MCF 10A (cell line): ENCODE measurements at regions of chr19 and their contacts with region 1.

Region 1: GRCh38 chr19:38929929-38930775 is at the start of gene SARS2:
- DNase-seq: peak; percentile 93
- H3K4me3 Mint-ChIP-seq: peak within 1 kb of the TSS; percentile 85
- H3K27ac Mint-ChIP-seq: peak within 1 kb of the TSS; percentile 95
- H3K4me1 Mint-ChIP-seq: peaks cover 14% of the 10 kb centered on the region
- H3K27me3 Mint-ChIP-seq: no peaks in the 10 kb centered on the region
- CTCF ChIP-seq: peak; percentile 95
- total RNA-seq, gene SARS2: 9.3 and 23.6 TPM in 2 replicates

Region 2: DNA sequence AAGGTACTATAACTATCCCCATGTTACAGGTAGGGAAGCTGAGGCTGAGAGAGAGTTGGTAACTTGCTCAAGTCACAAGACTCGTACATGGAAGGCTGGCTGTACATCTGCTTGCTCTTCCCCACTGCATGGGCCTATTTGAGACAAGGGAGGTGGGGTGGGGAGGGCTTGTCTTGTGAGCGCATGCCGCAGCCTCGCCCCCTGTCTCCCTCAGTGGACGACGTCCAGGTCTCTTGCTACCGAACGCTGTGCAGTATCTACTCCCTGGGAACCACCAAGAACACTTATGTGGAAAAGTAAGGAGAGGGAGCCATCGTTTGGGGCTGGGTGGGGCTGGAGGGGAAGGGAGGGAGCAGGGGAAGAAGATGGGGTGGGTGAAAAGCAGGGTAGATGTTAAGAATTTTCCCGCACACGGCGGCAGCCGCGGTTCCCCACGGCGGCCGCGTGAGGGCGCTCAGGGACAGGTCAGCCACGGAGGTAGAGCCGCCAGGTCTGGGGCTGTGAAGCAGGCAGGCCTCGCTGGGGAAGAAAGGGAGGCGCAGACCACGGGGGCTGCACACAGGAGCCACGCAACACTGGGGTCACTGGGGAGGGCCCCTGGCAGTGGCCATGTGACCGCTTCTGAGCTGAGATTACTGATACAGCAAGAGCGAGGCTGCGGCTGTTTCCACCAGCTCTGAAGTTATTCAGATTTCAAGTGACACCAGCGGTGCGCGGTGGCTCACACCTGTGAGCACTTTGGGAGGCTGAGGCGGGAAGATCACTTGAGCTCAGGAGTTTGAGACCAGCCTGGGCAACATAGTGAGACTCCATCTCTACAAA is 415.1 kb before region 1 on chr19:
- CTCF ChIA-PET with region 1: interaction called, 4 read pairs
- POLR2A ChIA-PET with region 1: no interaction called
- intact Hi-C with region 1: loop called (anchors 1 kb)
- DNase-seq: peak; percentile 65
- H3K4me3 Mint-ChIP-seq: no peak overlapping the region
- H3K27ac Mint-ChIP-seq: no peak overlapping the region
- H3K4me1 Mint-ChIP-seq: no peaks in the 10 kb centered on the region
- H3K27me3 Mint-ChIP-seq: peaks cover 22% of the 10 kb centered on the region
- CTCF ChIP-seq: peak; percentile 99

Region 3: GRCh38 chr19:38831142-38831605 is 99.0 kb before region 1 on chr19:
- CTCF ChIA-PET with region 1: interaction called, 3 read pairs
- POLR2A ChIA-PET with region 1: interaction called, 10 read pairs
- intact Hi-C with region 1: no loop called
- DNase-seq: peak; percentile 73
- H3K4me3 Mint-ChIP-seq: peak overlapping the region; percentile 77
- H3K27ac Mint-ChIP-seq: peak overlapping the region; percentile 82
- H3K4me1 Mint-ChIP-seq: peaks cover 17% of the 10 kb centered on the region
- H3K27me3 Mint-ChIP-seq: no peaks in the 10 kb centered on the region
- CTCF ChIP-seq: no peak

Region 4: DNA sequence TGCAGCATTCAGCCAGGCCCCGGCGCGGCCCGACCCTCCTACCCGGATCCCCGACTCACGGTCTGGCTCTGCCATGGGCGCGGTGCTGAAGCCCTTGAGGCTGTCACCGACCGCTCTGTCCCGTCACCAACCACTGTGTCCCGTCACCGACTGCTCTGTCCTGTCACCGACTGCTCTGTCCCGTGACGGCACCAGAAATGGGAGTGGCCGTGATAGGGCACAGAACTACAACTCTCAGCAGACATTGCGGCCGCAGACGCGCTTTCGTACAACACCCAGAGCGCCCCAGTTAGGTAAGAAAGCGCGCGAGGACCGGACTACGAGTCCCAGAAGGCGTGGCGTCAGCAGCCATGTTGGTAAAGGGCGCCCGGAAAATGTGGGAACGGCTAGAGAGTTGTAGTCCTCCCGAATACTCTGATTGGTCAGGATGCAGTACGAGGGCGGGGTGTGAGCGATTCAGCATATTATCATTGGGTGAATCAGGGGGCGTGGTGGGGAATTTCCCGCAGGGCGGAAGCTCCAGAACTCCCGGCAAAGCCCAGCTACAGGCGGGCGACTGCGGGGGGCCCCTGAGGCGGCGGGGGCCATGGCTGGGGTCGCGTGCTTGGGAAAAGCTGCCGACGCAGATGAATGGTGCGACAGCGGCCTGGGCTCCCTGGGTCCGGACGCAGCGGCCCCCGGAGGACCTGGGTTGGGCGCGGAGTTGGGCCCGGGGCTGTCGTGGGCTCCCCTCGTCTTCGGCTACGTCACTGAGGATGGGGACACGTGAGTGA is 30.5 kb before region 1 on chr19 and contains the starts of genes NFKBIB and SIRT2:
- CTCF ChIA-PET with region 1: interaction called, 11 read pairs
- POLR2A ChIA-PET with region 1: interaction called, 35 read pairs
- intact Hi-C with region 1: loop called (anchors 1 kb)
- DNase-seq: peak; percentile 100
- H3K4me3 Mint-ChIP-seq: peak within 1 kb of the TSS; percentile 88
- H3K27ac Mint-ChIP-seq: peak within 1 kb of the TSS; percentile 98
- H3K4me1 Mint-ChIP-seq: peaks cover 27% of the 10 kb centered on the region
- H3K27me3 Mint-ChIP-seq: no peaks in the 10 kb centered on the region
- CTCF ChIP-seq: no peak
- total RNA-seq, gene NFKBIB: 45.1 and 45.4 TPM in 2 replicates
- total RNA-seq, gene SIRT2: 35.5 and 37.4 TPM in 2 replicates

Region 5: GRCh38 chr19:39264306-39265290 is 334.4 kb after region 1 on chr19:
- CTCF ChIA-PET with region 1: no interaction called
- POLR2A ChIA-PET with region 1: no interaction called
- intact Hi-C with region 1: no loop called
- DNase-seq: no peak
- H3K4me3 Mint-ChIP-seq: no peak overlapping the region
- H3K27ac Mint-ChIP-seq: no peak overlapping the region
- H3K4me1 Mint-ChIP-seq: no peaks in the 10 kb centered on the region
- H3K27me3 Mint-ChIP-seq: peaks cover 47% of the 10 kb centered on the region
- CTCF ChIP-seq: no peak